ENCODE measurements at regions of chr3 and their contacts with region 1.

Region 1: GRCh38 chr3:12287727-12288191 is 1.1 kb upstream of the PPARG start:
- DNase-seq: peak; percentile 66 to 79 (median 74)
- ATAC-seq: peak; percentile 70 to 91 (median 88)
- H3K4me3 ChIP-seq: peak overlapping the region; percentile 77 to 97 (median 90)
- H3K27ac ChIP-seq: peak overlapping the region; percentile 77 to 92 (median 87)
- H3K4me1 ChIP-seq: peaks cover 0 to 15% (median 6%) of the 10 kb centered on the region in 12 donors
- H3K27me3 ChIP-seq: peaks cover 0 to 7% (median 0%) of the 10 kb centered on the region in 9 donors
- CTCF ChIP-seq: peak in 1 of 12 donors; percentile 6
- POLR2A ChIP-seq: no peak

Region 2: GRCh38 chr3:12143949-12144504 is 143.7 kb before region 1 on chr3:
- intact Hi-C with region 1: loop called in 5 of 10 experiments (anchors 5 to 10 kb)
- DNase-seq: peak; percentile 58 to 89 (median 69)
- ATAC-seq: peak; percentile 81 to 91 (median 88)
- H3K4me3 ChIP-seq: no peak overlapping the region
- H3K27ac ChIP-seq: peak overlapping the region; percentile 61 to 94 (median 86)
- H3K4me1 ChIP-seq: peaks cover 3 to 77% (median 41%) of the 10 kb centered on the region in 12 donors
- H3K27me3 ChIP-seq: no peaks in the 10 kb centered on the region
- CTCF ChIP-seq: no peak
- POLR2A ChIP-seq: peak in 1 of 2 donors; percentile 15

Region 3: DNA sequence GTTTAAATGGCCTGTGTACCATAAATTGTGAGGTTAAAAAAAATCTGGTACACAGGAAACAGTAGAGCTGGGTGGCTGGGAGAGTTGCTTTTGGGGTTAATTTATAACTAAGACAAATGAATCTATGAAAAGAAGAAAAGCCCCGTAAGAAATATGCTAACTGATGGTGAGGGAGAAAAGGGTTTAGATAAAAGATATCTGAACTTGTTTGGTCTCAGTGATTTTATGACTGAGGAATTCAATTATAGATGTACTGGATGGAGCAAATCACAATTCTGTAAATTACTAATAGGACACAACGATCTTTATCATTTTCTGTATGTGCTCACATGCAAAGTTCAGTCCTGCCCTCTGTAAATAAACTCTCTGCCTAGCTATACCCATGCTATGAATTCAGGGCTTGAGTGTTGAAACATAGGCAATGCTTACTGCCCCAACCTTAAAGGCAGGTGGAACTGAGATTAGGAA is 29.1 kb after region 1 on chr3:
- intact Hi-C with region 1: loop called in 1 of 10 experiments (anchors 2 kb)
- DNase-seq: no peak
- ATAC-seq: no peak
- H3K4me3 ChIP-seq: no peak overlapping the region
- H3K27ac ChIP-seq: peak overlapping the region in 6 of 12 donors; percentile 10 to 54 (median 40)
- H3K4me1 ChIP-seq: peaks cover 0 to 40% (median 20%) of the 10 kb centered on the region in 12 donors
- H3K27me3 ChIP-seq: no peaks in the 10 kb centered on the region
- CTCF ChIP-seq: no peak
- POLR2A ChIP-seq: no peak

Region 4: GRCh38 chr3:12384451-12385233 is 96.9 kb after region 1 on chr3:
- intact Hi-C with region 1: loop called in 1 of 10 experiments (anchors 10 kb)
- DNase-seq: no peak
- ATAC-seq: no peak
- H3K4me3 ChIP-seq: no peak overlapping the region
- H3K27ac ChIP-seq: no peak overlapping the region
- H3K4me1 ChIP-seq: peaks cover 0 to 9% (median 0%) of the 10 kb centered on the region in 12 donors
- H3K27me3 ChIP-seq: no peaks in the 10 kb centered on the region
- CTCF ChIP-seq: no peak
- POLR2A ChIP-seq: no peak

Region 5: GRCh38 chr3:12484198-12484974 is 196.6 kb after region 1 on chr3 and contains the start of gene TSEN2:
- intact Hi-C with region 1: loop called (anchors 2 to 5 kb)
- DNase-seq: peak; percentile 92 to 98 (median 95)
- ATAC-seq: peak; percentile 88 to 96 (median 95)
- H3K4me3 ChIP-seq: peak within 1 kb of the TSS; percentile 58 to 94 (median 78)
- H3K27ac ChIP-seq: peak within 1 kb of the TSS; percentile 44 to 86 (median 82)
- H3K4me1 ChIP-seq: peaks cover 0 to 41% (median 19%) of the 10 kb centered on the region in 12 donors
- H3K27me3 ChIP-seq: no peaks in the 10 kb centered on the region
- CTCF ChIP-seq: peak in 6 of 12 donors; percentile 10 to 43 (median 35)
- POLR2A ChIP-seq: peak in 1 of 2 donors; percentile 94
- total RNA-seq, gene TSEN2: 14.3 to 21.6 (median 18.4) TPM

Region 6: DNA sequence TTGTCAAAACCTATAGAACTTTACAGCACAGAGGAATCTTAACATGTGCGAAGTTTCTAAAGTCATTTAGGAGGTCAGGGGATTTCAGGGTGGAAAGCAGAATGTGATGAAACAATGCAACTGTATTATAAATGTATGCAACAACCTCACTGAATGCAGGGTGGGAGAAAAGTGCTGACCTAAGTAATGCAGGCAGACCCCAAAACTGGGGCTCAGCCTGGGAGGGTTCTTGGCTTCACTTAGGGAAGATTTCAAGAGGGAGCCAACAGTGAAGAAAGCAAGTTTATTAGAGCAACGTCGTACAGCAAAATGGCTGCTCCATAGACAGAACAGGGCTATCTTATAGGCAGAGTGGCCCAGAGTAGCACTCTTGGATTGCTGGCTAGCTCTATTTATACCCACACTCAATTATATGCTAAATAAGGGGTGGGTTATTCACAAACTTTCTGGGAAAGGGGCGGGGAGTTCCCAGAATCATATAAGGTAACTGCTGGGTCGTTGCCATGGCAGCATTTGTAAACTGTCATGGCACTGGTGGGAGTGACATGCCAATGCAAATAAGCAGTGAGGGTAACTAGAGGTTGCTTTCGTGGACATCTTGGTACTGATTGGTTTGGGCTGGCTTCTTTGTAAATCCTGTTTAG is 494.5 kb after region 1 on chr3:
- intact Hi-C with region 1: no loop called
- DNase-seq: no peak
- ATAC-seq: peak; percentile 32 to 84 (median 80)
- H3K4me3 ChIP-seq: no peak overlapping the region
- H3K27ac ChIP-seq: no peak overlapping the region
- H3K4me1 ChIP-seq: peaks cover 0 to 5% (median 0%) of the 10 kb centered on the region in 12 donors
- H3K27me3 ChIP-seq: peaks cover 0 to 4% (median 0%) of the 10 kb centered on the region in 9 donors
- CTCF ChIP-seq: no peak
- POLR2A ChIP-seq: no peak

Region 7: GRCh38 chr3:12853191-12853741 is 565.5 kb after region 1 on chr3:
- intact Hi-C with region 1: no loop called
- DNase-seq: peak in 1 of 5 donors; percentile 42
- ATAC-seq: peak in 2 of 4 donors; percentile 57 to 89
- H3K4me3 ChIP-seq: no peak overlapping the region
- H3K27ac ChIP-seq: no peak overlapping the region
- H3K4me1 ChIP-seq: no peaks in the 10 kb centered on the region
- H3K27me3 ChIP-seq: no peaks in the 10 kb centered on the region
- CTCF ChIP-seq: no peak
- POLR2A ChIP-seq: no peak

Region 8: DNA sequence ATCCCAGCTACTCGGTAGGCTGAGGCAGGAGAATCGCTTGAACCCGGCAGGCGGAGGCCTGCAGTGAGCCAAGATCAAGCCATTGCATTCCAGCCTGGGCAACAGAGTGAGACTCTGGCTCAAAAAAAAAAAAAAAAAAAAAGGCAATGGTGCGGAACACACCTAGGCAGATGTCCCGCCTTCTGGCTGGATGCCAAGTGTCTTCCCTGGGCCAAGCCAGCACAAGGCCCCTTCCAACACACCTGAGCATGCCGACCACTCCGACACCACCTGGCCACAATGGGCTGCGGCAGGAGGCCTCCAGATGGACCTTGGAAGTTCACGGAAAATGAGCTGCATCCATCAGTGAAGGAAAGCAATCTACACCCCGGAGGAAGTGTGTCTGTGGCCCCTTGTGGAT is 1113.4 kb after region 1 on chr3:
- intact Hi-C with region 1: no loop called
- DNase-seq: no peak
- ATAC-seq: no peak
- H3K4me3 ChIP-seq: no peak overlapping the region
- H3K27ac ChIP-seq: no peak overlapping the region
- H3K4me1 ChIP-seq: no peaks in the 10 kb centered on the region
- H3K27me3 ChIP-seq: no peaks in the 10 kb centered on the region
- CTCF ChIP-seq: no peak
- POLR2A ChIP-seq: no peak